GM13977 (cell line): ENCODE measurements at regions of chr11 and their contacts with region 1.

Region 1: GRCh38 chr11:65884686-65885092 is 3.6 kb downstream of the FIBP start:
- DNase-seq: peak; percentile 87
- CTCF ChIP-seq: peak; percentile 100

Region 2: DNA sequence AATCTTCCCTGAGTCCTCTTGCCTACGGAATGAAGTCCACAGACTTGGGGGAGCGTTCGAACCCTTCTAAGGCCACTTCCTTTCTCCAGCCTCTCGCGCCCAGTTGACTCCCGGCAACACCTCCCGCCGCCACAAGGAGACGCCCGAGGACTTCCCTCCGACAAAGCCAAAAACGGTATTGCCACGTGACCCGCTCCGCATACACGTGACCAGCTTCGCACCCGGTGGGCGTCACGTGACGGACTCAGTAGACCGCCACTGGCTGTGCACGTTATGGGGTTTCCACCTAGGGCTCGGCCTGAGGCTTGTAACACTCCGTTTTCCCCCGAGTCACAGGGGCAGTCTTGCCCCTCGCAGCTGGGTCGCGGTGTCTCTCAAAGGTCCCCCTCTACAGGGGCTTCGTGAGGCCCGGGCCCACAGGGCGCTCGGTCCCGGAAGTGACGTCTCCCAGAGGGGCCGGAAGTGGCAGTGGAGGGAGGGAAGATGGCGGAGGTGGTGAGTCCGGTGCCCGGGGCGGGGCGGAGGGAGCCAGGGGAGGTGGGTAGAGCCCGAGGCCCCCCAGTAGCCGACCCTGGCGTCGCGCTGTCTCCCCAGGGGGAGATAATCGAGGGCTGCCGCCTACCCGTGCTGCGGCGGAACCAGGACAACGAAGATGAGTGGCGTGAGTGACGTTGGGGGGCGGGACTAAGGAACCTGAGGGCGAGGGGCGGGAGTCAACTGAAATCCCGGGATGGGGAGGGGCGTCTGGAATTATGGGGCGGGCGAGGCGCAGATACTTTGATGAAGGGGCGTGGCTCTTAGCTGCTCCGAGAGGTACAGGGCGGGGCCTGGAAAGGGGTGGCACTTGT is 172.7 kb before region 1 on chr11 and contains the start of gene KAT5:
- in situ Hi-C with region 1: no loop called
- DNase-seq: peak; percentile 89
- CTCF ChIP-seq: peak; percentile 99

Region 3: DNA sequence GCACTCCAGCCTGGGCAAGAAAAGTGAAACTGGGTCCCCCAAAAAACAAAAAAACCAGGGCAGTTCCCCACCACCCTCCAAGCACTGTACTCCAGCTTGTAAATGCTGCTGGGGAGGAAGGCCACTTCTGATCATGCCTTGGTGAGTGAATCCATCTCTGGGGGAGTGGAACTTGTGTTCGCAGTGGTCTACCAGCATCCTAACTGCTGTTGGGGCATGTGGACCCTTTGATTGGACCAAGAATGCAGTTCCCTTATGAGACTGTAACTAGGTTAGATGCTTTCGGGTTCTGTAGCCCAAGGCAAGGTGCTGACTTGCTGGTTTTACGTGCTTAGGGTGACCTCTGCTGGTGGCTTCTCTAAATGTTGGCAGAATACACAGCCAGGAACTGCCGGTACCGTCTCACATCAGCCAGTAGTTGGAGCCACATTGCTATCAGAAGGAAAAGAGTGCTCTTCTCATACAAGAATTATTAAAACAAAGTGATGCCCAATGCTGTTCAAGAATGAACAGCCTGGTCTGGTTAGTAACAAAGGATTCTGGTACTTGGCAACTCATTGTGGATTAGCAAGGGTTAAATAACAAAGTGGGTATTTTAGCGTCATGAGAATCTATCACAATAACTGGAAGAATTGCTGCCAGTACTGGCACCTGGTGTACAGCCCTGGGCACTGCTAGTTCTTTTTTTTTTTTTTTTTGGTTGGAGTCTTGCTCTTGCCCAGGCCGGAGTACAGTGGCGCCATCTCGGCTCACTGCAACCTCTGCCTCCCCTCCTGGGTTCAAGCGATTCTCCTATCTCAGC is 104.3 kb after region 1 on chr11:
- in situ Hi-C with region 1: loop called (anchors 5 kb)
- DNase-seq: peak; percentile 92
- CTCF ChIP-seq: peak; percentile 98

Region 4: GRCh38 chr11:66106786-66107599 is 222.3 kb after region 1 on chr11:
- in situ Hi-C with region 1: no loop called
- DNase-seq: no peak
- CTCF ChIP-seq: no peak